ENCODE measurements at regions of chr20 and their contacts with region 1.

Region 1: DNA sequence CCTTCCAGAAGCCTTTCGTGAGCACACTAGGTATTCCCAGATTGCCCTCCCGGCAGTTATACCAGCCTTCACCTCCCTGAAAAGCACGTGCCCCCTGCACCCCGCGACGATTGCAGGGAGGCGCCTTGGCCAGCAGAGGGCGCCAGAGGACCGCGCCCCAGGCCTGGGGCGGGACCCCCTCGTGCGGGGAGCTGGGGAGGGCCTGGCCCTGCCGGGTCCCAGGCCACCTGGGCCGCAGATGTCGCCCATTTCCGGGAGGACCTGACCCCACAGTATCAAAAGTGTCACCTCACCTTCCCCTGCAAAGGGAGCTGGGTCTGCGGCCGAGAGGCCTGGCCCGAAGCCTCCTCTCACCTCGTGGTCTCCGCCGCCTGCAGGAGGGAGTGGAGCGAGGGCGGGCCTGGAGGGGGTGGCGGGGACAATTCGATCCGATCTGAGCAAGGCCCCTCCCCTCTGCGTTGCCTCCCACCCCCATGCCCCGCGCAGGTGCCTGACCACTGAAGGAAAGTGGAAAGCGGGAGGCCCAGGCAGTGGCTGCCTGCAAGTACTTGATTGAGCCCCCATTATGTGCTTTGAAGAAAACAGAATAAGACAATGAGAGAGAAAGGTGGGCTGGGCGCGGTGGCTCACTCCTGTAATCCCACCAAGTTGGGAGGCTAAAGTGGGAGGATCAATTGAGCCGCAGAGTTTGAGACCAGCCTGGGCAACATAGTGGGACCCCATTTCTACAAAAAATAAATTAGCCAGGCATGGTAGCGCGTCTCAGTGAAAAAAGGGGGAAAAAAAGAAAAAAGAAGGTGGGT is 3.5 kb upstream of the SNAI1 start:
- DNase-seq: peak; percentile 52
- H3K4me3 ChIP-seq: peak overlapping the region; percentile 58
- H3K27ac ChIP-seq: no peak overlapping the region
- H3K4me1 ChIP-seq: peaks cover 11% of the 10 kb centered on the region; the same call in 1 of the 2 replicates
- H3K27me3 ChIP-seq: no peaks in the 10 kb centered on the region

Region 2: GRCh38 chr20:50070991-50071888 is 92.0 kb after region 1 on chr20:
- in situ Hi-C with region 1: loop called (anchors 5 kb)
- DNase-seq: peak; percentile 89
- H3K4me3 ChIP-seq: peak overlapping the region; percentile 77
- H3K27ac ChIP-seq: no peak overlapping the region
- H3K4me1 ChIP-seq: no peaks in the 10 kb centered on the region
- H3K27me3 ChIP-seq: no peaks in the 10 kb centered on the region

Region 3: DNA sequence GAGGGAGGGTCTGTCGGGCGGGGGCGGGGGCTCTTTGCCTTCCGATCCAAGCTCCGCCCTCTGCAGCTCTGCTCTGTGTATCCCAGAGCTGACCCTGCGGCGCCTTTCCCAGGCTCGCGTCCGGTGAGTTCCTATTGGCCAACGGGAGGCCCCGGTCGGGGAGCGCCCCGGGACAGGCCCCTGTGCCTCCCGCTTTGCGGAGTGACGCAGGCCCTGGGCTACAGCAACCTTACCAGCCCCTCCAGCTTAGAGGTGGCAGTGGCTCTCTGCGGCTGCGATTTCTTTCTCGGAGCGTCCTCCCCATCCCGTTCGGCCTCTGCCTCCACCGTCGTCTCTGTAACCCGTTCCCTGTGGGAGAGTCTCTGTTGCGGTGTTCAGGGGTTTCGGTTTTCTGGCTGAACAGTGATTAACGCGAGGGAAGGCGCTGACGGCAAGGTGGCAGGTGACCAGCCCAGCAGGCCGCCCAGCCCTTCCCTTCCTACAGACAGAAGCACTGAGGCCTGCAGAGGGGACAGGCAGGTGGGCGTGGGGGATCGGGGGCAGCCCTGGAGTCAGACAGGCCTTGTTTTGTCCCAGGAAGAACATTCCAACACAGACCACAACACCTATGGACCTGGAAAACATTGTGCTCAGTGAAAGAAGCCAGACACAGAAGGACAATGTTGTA is 193.2 kb after region 1 on chr20:
- in situ Hi-C with region 1: loop called (anchors 10 kb)
- DNase-seq: peak; percentile 83
- H3K4me3 ChIP-seq: peak overlapping the region; percentile 68
- H3K27ac ChIP-seq: no peak overlapping the region
- H3K4me1 ChIP-seq: 0 out of 2 replicates have a peak, but pooled peaks cover 4% of the 10 kb centered on the region
- H3K27me3 ChIP-seq: no peaks in the 10 kb centered on the region

Region 4: DNA sequence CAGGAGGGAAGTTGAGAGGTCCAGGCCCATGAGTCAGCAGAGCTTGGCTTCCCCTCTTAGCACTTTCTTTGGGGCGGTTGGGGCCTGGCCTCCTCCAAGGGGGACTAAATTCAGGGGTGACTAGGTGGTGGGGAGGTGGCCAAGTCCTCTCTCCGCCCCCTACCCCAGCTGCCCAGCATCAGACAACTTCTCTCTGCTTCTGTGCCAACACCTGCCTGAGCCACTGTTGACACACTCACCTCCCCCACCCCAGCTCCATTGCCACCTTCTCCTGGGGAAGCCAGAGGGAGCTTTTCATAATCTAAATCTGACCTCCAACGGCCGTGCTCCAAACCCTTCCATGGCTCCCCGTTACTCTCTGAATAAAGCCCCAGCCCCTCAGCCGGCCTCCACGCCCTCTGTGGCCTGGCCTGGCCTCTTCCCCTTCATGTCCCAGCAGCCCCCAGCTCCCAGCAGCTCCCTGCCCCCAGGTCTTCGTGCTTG is 281.5 kb after region 1 on chr20:
- in situ Hi-C with region 1: no loop called
- DNase-seq: peak; percentile 29
- H3K4me3 ChIP-seq: no peak overlapping the region
- H3K27ac ChIP-seq: no peak overlapping the region
- H3K4me1 ChIP-seq: peaks cover 16% of the 10 kb centered on the region
- H3K27me3 ChIP-seq: no peaks in the 10 kb centered on the region

Region 5: GRCh38 chr20:50595988-50596689 is 616.9 kb after region 1 on chr20:
- in situ Hi-C with region 1: no loop called
- DNase-seq: no peak
- H3K4me3 ChIP-seq: no peak overlapping the region
- H3K27ac ChIP-seq: no peak overlapping the region
- H3K4me1 ChIP-seq: no peaks in the 10 kb centered on the region
- H3K27me3 ChIP-seq: no peaks in the 10 kb centered on the region

Measured in GM23248 (cell line).